ENCODE measurements at regions of chr6 and their contacts with region 1.

Region 1: GRCh38 chr6:99467509-99468106 is 42.5 kb upstream of the PNISR start:
- DNase-seq: no peak
- ATAC-seq: peak; percentile 64
- H3K4me3 ChIP-seq: no peak overlapping the region
- H3K27ac ChIP-seq: no peak overlapping the region
- H3K4me1 ChIP-seq: no peaks in the 10 kb centered on the region
- H3K27me3 ChIP-seq: no peaks in the 10 kb centered on the region
- CTCF ChIP-seq: peak; percentile 51 to 71 (median 56)
- EP300 ChIP-seq: no peak
- POLR2A ChIP-seq: no peak
- RAD21 ChIP-seq: peak; percentile 92

Region 2: GRCh38 chr6:99588618-99589289 is 121.1 kb after region 1 on chr6:
- CTCF ChIA-PET with region 1: interaction called, 16 read pairs
- POLR2A ChIA-PET with region 1: no interaction called
- RAD21 ChIA-PET with region 1: interaction called, 12 read pairs
- SMC1A ChIA-PET with region 1: interaction called, 5 read pairs
- in situ Hi-C with region 1: no loop called
- intact Hi-C with region 1: no loop called
- DNase-seq: no peak
- ATAC-seq: peak; percentile 94
- H3K4me3 ChIP-seq: peak overlapping the region; percentile 74
- H3K27ac ChIP-seq: no peak overlapping the region
- H3K4me1 ChIP-seq: no peaks in the 10 kb centered on the region
- H3K27me3 ChIP-seq: peaks cover 12 to 16% of the 10 kb centered on the region in 2 experiments
- CTCF ChIP-seq: peak; percentile 67 to 78 (median 74); a peak in 5 of 6 replicates
- EP300 ChIP-seq: no peak
- POLR2A ChIP-seq: no peak
- RAD21 ChIP-seq: peak; percentile 85

Region 3: DNA sequence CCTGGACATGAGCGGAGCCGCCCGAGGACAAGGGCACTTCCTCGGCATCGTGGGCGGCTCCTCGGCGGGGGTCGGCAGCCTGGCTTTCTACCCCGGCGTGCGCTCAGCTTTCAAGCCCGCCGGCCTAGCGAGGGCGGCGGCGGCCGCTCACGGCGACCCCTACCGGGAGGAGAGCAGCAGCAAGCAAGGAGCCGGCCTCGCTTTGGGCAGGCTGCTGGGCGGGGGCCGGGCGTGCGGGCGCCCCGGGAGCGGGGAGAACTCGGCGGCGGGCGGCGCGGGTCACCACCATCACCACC is 145.7 kb after region 1 on chr6:
- CTCF ChIA-PET with region 1: interaction called, 3 read pairs
- POLR2A ChIA-PET with region 1: no interaction called
- RAD21 ChIA-PET with region 1: no interaction called
- SMC1A ChIA-PET with region 1: interaction called, 3 read pairs
- in situ Hi-C with region 1: no loop called
- intact Hi-C with region 1: loop called (anchors 5 kb)
- DNase-seq: no peak
- ATAC-seq: peak; percentile 66
- H3K4me3 ChIP-seq: peak overlapping the region; percentile 49; the same call in 1 of the 2 replicates
- H3K27ac ChIP-seq: no peak overlapping the region
- H3K4me1 ChIP-seq: peaks cover 19% of the 10 kb centered on the region
- H3K27me3 ChIP-seq: peaks cover 3 to 20% of the 10 kb centered on the region in 2 experiments
- CTCF ChIP-seq: peak; percentile 34 to 55 (median 38); a peak in 5 of 6 replicates
- EP300 ChIP-seq: no peak
- POLR2A ChIP-seq: no peak
- RAD21 ChIP-seq: peak; percentile 24; the same call in 1 of the 2 replicates

Measured in GM12878 (cell line).